SK-N-SH (cell line): ENCODE measurements at regions of chr11 and their contacts with region 1.

Region 1: DNA sequence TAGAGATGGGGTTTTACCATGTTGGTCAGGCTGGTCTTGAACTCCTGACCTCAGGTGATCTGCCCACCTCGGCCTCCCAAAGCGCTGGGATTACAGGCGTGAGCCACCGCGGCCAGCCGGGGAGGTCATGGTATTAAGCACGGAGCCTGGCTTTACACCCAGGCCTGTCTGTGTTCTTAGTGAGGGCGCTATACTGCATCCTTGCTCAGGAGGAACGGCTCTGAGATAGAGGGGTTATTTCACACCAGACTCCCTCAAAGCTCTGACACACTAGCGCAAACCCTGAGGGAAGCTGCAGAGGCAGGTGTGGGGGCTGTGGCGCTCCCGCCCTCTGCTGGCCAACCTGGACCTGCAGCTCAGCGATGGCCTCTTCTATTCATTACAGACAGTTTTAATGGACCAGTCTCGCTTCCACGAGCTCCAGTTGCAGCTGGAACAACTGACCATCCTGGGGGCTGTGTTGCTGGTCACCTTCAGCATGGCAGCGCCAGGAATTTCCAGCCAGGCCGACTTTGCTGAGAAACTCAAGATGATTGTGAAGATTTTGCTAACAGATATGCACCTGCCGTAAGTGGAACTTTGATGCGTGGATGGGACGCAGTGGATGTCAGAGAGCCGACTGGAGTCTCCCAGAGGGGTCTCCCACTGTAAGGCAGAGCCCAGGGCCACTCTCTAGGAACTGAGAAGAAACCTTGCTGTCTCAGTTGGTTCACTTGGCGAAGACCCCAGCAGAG is 26.2 kb downstream of the TCP11L1 start:
- DNase-seq: peak; percentile 74
- H3K4me3 ChIP-seq: no peak overlapping the region; a peak in 1 of 4 replicates
- H3K27ac ChIP-seq: no peak overlapping the region
- H3K4me1 ChIP-seq: peaks cover 9 to 37% of the 10 kb centered on the region in 2 experiments; a peak in 3 of 4 replicates
- H3K27me3 ChIP-seq: no peaks in the 10 kb centered on the region
- CTCF ChIP-seq: peak; percentile 93
- EP300 ChIP-seq: no peak
- RAD21 ChIP-seq: peak; percentile 95

Region 2: GRCh38 chr11:32947978-32948377 is 117.6 kb before region 1 on chr11:
- CTCF ChIA-PET with region 1: interaction called, 11 read pairs
- POLR2A ChIA-PET with region 1: no interaction called
- DNase-seq: no peak
- H3K4me3 ChIP-seq: no peak overlapping the region
- H3K27ac ChIP-seq: peak overlapping the region in 1 of 2 experiments; percentile 50; a peak in 2 of 4 replicates
- H3K4me1 ChIP-seq: peaks cover 2 to 17% of the 10 kb centered on the region in 2 experiments; a peak in 3 of 4 replicates
- H3K27me3 ChIP-seq: no peaks in the 10 kb centered on the region
- CTCF ChIP-seq: no peak
- EP300 ChIP-seq: no peak
- RAD21 ChIP-seq: no peak

Region 3: GRCh38 chr11:32960553-32961164 is 105.0 kb before region 1 on chr11:
- CTCF ChIA-PET with region 1: interaction called, 42 read pairs
- POLR2A ChIA-PET with region 1: no interaction called
- DNase-seq: peak; percentile 30
- H3K4me3 ChIP-seq: no peak overlapping the region
- H3K27ac ChIP-seq: no peak overlapping the region
- H3K4me1 ChIP-seq: no peaks in the 10 kb centered on the region
- H3K27me3 ChIP-seq: no peaks in the 10 kb centered on the region
- CTCF ChIP-seq: peak; percentile 77
- EP300 ChIP-seq: no peak
- RAD21 ChIP-seq: peak; percentile 84

Region 4: DNA sequence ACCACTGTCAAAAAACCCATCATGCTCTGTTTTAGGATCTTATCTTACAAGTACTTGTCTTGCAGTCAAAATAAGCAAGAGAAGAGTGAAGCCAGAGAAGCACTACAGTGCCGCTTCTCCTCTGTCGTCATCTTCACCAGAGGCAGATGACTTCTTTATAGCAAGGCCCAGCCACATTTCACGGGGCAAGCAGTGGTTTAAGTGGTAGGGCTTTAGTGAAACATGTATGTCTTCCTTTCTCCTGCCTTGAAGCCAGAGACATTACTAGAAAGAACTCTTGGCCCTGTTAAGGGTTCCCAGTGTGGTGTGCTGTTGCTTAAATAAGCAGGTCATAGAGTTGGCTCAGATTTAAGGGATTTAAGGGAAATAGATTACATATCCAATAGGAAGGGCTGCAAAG is 92.8 kb before region 1 on chr11:
- CTCF ChIA-PET with region 1: interaction called, 42 read pairs
- POLR2A ChIA-PET with region 1: no interaction called
- DNase-seq: no peak
- H3K4me3 ChIP-seq: no peak overlapping the region
- H3K27ac ChIP-seq: no peak overlapping the region
- H3K4me1 ChIP-seq: no peaks in the 10 kb centered on the region
- H3K27me3 ChIP-seq: no peaks in the 10 kb centered on the region
- CTCF ChIP-seq: no peak
- EP300 ChIP-seq: no peak
- RAD21 ChIP-seq: no peak

Region 5: DNA sequence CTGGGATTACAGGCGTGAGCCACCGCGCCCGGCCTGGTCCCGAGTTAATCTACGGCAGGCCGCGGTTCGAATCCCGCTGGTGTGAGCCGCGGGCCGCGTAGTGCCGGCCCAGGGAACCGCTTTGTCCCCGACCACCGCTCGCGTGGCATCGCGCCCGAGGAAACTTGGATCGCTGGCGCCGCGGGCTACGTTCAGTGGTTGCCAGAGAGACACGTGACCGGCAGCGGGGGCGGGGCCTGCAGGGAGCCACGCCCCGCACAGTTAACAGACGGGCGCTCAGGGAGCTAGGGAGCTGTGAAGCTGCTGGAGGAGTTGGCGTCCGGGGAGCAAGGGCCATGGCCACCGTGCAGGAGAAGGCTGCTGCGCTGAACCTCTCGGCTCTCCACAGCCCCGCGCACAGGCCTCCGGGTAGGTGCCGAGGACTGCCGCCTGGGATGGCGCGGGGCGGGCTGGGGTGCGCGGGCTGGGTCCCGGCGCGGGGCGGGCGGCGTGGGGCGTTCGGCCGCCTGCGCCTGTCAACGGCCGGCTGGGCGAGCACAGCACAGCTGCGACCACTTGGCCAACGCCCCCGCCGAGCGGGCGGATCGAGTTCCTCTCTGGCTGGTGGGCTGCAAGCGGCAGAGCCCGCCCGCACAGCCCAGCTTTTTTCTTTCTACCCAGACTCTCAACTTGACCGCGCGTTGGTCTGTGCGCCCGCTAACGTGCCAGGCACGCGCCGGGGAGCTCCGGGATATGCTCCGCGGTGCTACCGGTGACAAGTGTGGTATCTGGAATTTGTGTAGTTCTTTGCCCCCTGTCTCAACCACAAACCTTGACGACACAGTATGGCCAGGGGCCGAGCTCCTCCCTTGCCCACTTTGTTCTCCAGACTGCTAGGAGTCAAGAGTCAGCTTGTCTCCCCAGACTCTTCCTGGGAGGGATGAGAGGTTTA is 49.7 kb before region 1 on chr11 and contains the start of gene DEPDC7:
- CTCF ChIA-PET with region 1: interaction called, 14 read pairs
- POLR2A ChIA-PET with region 1: no interaction called
- DNase-seq: peak; percentile 95
- H3K4me3 ChIP-seq: peak within 1 kb of the TSS; percentile 65 to 81
- H3K27ac ChIP-seq: peak within 1 kb of the TSS; percentile 40 to 47; a peak in 3 of 4 replicates
- H3K4me1 ChIP-seq: peaks cover 5 to 29% of the 10 kb centered on the region in 2 experiments; a peak in 3 of 4 replicates
- H3K27me3 ChIP-seq: no peaks in the 10 kb centered on the region
- CTCF ChIP-seq: no peak
- EP300 ChIP-seq: no peak
- RAD21 ChIP-seq: no peak
- polyA plus RNA-seq, gene DEPDC7: 9.7 and 14.2 TPM in 2 replicates

Region 6: GRCh38 chr11:33039274-33040032 is 26.2 kb before region 1 on chr11 and contains the start of gene TCP11L1:
- CTCF ChIA-PET with region 1: interaction called, 13 read pairs
- POLR2A ChIA-PET with region 1: interaction called, 3 read pairs
- DNase-seq: peak; percentile 93
- H3K4me3 ChIP-seq: peak within 1 kb of the TSS; percentile 71 to 77
- H3K27ac ChIP-seq: peak within 1 kb of the TSS; percentile 94 to 96
- H3K4me1 ChIP-seq: peaks cover 8 to 35% of the 10 kb centered on the region in 2 experiments; a peak in 3 of 4 replicates
- H3K27me3 ChIP-seq: no peaks in the 10 kb centered on the region
- CTCF ChIP-seq: no peak
- EP300 ChIP-seq: 0 out of 4 replicates have a peak, but pooled peaks of 1 of the 2 experiments have one; percentile 15
- RAD21 ChIP-seq: no peak
- polyA plus RNA-seq, gene TCP11L1: 12.7 and 15.1 TPM in 2 replicates

Region 7: DNA sequence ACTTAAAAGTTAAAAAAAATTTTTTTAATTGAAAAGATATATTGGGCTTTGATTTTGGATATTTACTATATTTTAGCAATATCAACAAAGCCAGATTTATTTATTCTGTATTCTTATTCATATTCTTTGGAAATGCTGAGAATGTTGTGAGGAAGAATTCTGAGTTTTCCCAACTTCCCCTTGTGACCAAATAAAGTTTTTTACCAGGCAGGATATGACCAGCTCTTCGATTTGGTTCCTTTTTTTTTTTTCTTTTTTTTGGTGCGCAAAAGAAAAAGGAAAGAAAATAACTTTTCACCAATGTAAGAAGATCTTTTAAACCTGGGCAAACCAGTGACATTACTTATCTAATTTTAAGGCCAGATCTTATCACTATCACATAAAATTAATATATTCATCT is 13.4 kb before region 1 on chr11:
- CTCF ChIA-PET with region 1: interaction called, 36 read pairs
- POLR2A ChIA-PET with region 1: no interaction called
- DNase-seq: no peak
- H3K4me3 ChIP-seq: no peak overlapping the region
- H3K27ac ChIP-seq: no peak overlapping the region
- H3K4me1 ChIP-seq: peaks cover 14 to 31% of the 10 kb centered on the region in 2 experiments; a peak in 3 of 4 replicates
- H3K27me3 ChIP-seq: no peaks in the 10 kb centered on the region
- CTCF ChIP-seq: no peak
- EP300 ChIP-seq: no peak
- RAD21 ChIP-seq: no peak

Region 8: DNA sequence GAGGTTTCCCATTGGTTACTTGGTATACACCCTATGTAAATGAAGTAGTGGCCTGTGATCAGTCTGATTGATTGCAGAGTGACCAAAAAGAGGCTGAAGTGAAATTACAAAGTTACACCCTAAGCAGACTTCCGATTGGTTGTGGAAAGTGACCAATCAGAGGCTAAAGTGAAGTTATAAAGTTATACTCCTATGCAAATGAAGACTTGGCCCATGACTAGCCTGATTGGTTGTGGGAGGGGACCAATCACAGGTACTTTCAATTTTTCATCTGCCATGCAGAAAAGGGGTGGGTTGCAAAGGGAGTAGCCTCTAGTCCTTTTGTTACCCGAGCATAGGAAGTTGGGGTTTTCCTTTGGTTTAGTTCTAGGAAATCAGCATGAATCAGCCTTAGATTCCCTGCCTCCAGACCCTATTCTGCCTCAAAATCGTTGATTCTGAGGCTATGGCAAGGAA is 113.8 kb after region 1 on chr11:
- CTCF ChIA-PET with region 1: no interaction called
- POLR2A ChIA-PET with region 1: no interaction called
- DNase-seq: no peak
- H3K4me3 ChIP-seq: no peak overlapping the region
- H3K27ac ChIP-seq: peak overlapping the region in 1 of 2 experiments; percentile 63; a peak in 2 of 4 replicates
- H3K4me1 ChIP-seq: peaks cover 0 to 6% of the 10 kb centered on the region in 2 experiments; a peak in 2 of 4 replicates
- H3K27me3 ChIP-seq: no peaks in the 10 kb centered on the region
- CTCF ChIP-seq: no peak
- EP300 ChIP-seq: no peak
- RAD21 ChIP-seq: no peak

Region 9: GRCh38 chr11:33557201-33557600 is 491.6 kb after region 1 on chr11:
- CTCF ChIA-PET with region 1: no interaction called
- POLR2A ChIA-PET with region 1: no interaction called
- DNase-seq: no peak
- H3K4me3 ChIP-seq: no peak overlapping the region
- H3K27ac ChIP-seq: peak overlapping the region in 1 of 2 experiments; percentile 87; a peak in 2 of 4 replicates
- H3K4me1 ChIP-seq: peaks cover 0 to 4% of the 10 kb centered on the region in 2 experiments; a peak in 2 of 4 replicates
- H3K27me3 ChIP-seq: no peaks in the 10 kb centered on the region
- CTCF ChIP-seq: no peak
- EP300 ChIP-seq: peak in 1 of 2 experiments; percentile 47; a peak in 1 of 4 replicates
- RAD21 ChIP-seq: no peak